Heart right ventricle (tissue), 16 donors: ENCODE measurements at regions of chr3 and their contacts with region 1.

Region 1: GRCh38 chr3:160003520-160004128 is 15.0 kb downstream of the IL12A start:
- DNase-seq: peak; percentile 52 to 63
- ATAC-seq: peak; percentile 67 to 92 (median 84)
- H3K4me3 ChIP-seq: no peak overlapping the region
- H3K27ac ChIP-seq: no peak overlapping the region
- H3K4me1 ChIP-seq: peaks cover 0 to 6% (median 0%) of the 10 kb centered on the region in 9 donors
- H3K27me3 ChIP-seq: no peaks in the 10 kb centered on the region
- CTCF ChIP-seq: peak; percentile 44 to 77 (median 68)

Region 2: GRCh38 chr3:159266779-159267178 is 736.8 kb before region 1 on chr3:
- intact Hi-C with region 1: loop called (anchors 5 to 10 kb)
- DNase-seq: no peak
- ATAC-seq: no peak
- H3K4me3 ChIP-seq: no peak overlapping the region
- H3K27ac ChIP-seq: no peak overlapping the region
- H3K4me1 ChIP-seq: no peaks in the 10 kb centered on the region
- H3K27me3 ChIP-seq: peaks cover 0 to 3% (median 0%) of the 10 kb centered on the region in 7 donors
- CTCF ChIP-seq: peak in 6 of 9 donors; percentile 18 to 37 (median 29)

Region 3: GRCh38 chr3:159322322-159322939 is 681.2 kb before region 1 on chr3:
- intact Hi-C with region 1: loop called in 1 of 10 experiments (anchors 5 kb)
- DNase-seq: peak in 1 of 2 donors; percentile 40
- ATAC-seq: peak in 2 of 8 donors; percentile 44 to 68
- H3K4me3 ChIP-seq: no peak overlapping the region
- H3K27ac ChIP-seq: no peak overlapping the region
- H3K4me1 ChIP-seq: no peaks in the 10 kb centered on the region
- H3K27me3 ChIP-seq: no peaks in the 10 kb centered on the region
- CTCF ChIP-seq: peak; percentile 26 to 76 (median 64)

Region 4: DNA sequence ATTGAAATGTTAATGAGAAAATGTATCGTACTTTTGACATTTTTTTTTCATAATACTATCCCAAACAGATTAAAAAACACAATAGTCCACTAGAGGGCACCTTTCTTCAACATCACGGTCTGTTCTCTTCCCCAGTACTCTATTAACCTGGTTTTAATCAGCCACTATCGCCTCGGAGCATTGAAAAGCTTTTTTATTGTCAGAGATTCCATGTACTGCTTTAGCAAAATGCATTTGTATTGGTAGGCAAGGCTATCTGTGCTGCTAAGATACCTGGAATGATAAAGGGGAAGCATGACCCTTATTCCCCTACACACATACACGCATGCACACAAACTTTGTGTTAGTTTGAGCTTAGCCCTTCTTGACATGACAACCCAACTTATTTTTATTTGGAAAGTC is 175.1 kb before region 1 on chr3:
- intact Hi-C with region 1: loop called (anchors 2 to 5 kb)
- DNase-seq: no peak
- ATAC-seq: peak; percentile 30 to 83 (median 69)
- H3K4me3 ChIP-seq: no peak overlapping the region
- H3K27ac ChIP-seq: peak overlapping the region in 3 of 10 donors; percentile 5 to 52 (median 34)
- H3K4me1 ChIP-seq: peaks cover 0 to 56% (median 44%) of the 10 kb centered on the region in 9 donors
- H3K27me3 ChIP-seq: no peaks in the 10 kb centered on the region
- CTCF ChIP-seq: peak; percentile 48 to 78 (median 61)

Region 5: DNA sequence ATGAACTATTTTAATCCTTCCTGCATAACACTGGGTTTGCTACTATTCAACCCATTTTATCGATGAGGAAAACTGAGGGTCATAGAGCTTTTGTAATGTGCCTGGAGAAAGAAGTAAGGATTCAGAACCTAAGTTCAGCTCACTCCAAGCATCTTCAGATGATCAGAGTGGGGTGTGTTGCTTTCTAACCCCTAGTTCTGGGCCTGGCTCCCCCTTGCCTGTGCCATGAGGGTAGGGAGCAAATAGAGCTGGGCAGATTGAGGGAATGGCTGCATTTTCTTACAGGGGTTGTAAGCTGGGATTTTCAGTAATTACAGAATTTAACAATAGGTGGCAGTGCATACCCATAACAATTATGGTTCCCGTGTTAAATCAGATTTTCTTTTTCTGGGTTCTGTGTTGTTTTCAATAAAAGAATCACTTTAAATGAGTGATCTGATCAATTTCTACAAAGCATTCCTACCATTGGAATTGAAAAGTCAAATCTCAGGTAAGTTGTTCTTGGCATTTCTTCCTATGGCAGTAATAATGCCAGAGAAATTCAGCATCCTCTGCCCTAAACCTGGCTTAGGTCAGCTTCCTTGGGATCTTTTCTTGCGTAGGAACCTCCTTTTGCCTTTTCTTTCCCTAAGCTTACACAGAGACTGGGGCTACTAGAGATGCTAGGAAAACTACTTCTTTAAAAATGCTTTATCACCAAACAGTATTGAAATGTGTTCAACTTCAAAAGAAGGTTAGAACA is 118.8 kb before region 1 on chr3:
- intact Hi-C with region 1: loop called in 9 of 10 experiments (anchors 1 to 5 kb)
- DNase-seq: no peak
- ATAC-seq: no peak
- H3K4me3 ChIP-seq: no peak overlapping the region
- H3K27ac ChIP-seq: peak overlapping the region in 4 of 10 donors; percentile 11 to 40 (median 38)
- H3K4me1 ChIP-seq: peaks cover 16 to 78% (median 62%) of the 10 kb centered on the region in 9 donors
- H3K27me3 ChIP-seq: no peaks in the 10 kb centered on the region
- CTCF ChIP-seq: peak; percentile 32 to 76 (median 60)

Region 6: GRCh38 chr3:159929435-159930141 is 74.0 kb before region 1 on chr3:
- intact Hi-C with region 1: loop called in 2 of 10 experiments (anchors 2 to 5 kb)
- DNase-seq: peak; percentile 20 to 62
- ATAC-seq: peak; percentile 69 to 93 (median 86)
- H3K4me3 ChIP-seq: no peak overlapping the region
- H3K27ac ChIP-seq: peak overlapping the region in 9 of 10 donors; percentile 15 to 81 (median 56)
- H3K4me1 ChIP-seq: peaks cover 0 to 28% (median 9%) of the 10 kb centered on the region in 9 donors
- H3K27me3 ChIP-seq: no peaks in the 10 kb centered on the region
- CTCF ChIP-seq: peak in 7 of 9 donors; percentile 23 to 59 (median 41)